Activated naive CD4-positive, alpha-beta T cell treated with anti-CD3 and anti-CD28 coated beads for 36 hours (primary cell): ENCODE measurements at regions of chr3 and their contacts with region 1.

Region 1: DNA sequence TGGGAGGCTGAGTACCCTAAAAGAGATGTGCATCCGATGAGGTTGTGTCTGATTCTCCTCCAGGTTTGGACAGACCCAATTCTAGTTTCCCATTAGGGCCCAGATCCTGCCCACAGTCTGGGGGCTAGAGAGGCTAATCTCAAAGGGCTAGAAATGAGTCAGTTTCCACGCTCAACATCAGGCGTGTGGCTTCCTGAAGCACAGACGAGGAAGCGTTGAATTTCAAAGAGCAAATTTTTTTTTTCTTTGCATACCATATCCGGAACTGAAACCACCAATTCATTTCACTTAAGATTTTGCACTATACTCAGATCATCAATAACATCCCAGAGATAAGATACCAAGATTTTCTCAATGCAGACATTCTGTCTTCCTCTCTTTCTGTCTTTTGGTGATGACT is 173.8 kb upstream of the BCL6 start:
- DNase-seq: peak; percentile 77
- H3K4me3 Mint-ChIP-seq: peak overlapping the region; percentile 60
- H3K27ac Mint-ChIP-seq: peak overlapping the region; percentile 94
- H3K4me1 Mint-ChIP-seq: peaks cover 83% of the 10 kb centered on the region
- H3K27me3 Mint-ChIP-seq: no peaks in the 10 kb centered on the region

Region 2: DNA sequence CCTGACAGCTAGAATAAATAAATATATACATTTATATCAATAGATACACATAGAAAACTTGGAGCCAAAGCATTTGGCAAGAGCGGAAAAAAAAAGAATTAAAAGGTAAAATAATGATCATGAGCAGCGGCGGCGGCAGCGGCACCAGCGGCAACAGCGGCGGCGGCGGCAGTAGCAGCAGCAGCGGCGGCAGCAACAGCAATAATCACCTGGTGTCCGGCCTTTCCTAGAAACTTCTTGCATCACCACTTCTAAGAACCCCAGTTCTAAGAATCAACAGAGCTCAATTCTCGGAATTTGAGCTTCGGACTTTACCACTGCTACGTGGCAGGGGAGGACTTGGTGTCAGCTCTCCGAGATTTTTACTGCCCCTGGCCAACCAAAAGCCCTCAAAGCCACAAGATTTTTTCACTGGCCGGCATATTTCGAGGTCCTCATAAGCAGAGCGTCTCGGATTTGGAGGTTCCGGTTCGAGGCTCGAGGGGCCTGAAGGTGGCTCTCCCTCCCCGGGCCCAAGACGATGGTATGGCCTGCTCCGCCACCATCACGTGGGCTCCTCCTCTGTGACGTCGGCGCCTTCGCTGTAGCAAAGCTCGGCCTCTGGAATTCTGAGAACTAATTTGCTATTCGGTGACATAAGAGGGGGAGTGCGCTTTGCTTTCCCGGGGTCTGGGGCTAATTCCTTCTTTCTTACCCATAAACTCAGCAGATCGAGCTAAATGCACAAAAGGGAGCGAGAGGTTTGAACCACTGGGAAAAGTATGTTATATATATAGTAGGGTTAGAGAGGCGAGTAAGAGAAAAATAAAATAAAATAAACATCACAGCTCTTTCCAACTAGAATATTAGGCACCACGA is 173.6 kb before region 1 on chr3 and contains the start of gene BCL6:
- CTCF ChIA-PET with region 1: interaction called, 12 read pairs
- intact Hi-C with region 1: loop called (anchors 1 kb)
- DNase-seq: peak; percentile 92
- H3K4me3 Mint-ChIP-seq: peak within 1 kb of the TSS; percentile 86
- H3K27ac Mint-ChIP-seq: peak within 1 kb of the TSS; percentile 97
- H3K4me1 Mint-ChIP-seq: peaks cover 46% of the 10 kb centered on the region
- H3K27me3 Mint-ChIP-seq: no peaks in the 10 kb centered on the region
- total RNA-seq, gene BCL6: 98.9 to 101 TPM

Region 3: GRCh38 chr3:187802928-187803259 is 116.2 kb before region 1 on chr3:
- CTCF ChIA-PET with region 1: interaction called, 4 read pairs
- intact Hi-C with region 1: loop called (anchors 1 kb)
- DNase-seq: peak; percentile 89
- H3K4me3 Mint-ChIP-seq: peak overlapping the region; percentile 1
- H3K27ac Mint-ChIP-seq: peak overlapping the region; percentile 79
- H3K4me1 Mint-ChIP-seq: peaks cover 95% of the 10 kb centered on the region
- H3K27me3 Mint-ChIP-seq: no peaks in the 10 kb centered on the region

Region 4: GRCh38 chr3:187986514-187986934 is 67.5 kb after region 1 on chr3:
- CTCF ChIA-PET with region 1: interaction called, 3 read pairs
- intact Hi-C with region 1: loop called (anchors 2 kb)
- DNase-seq: peak; percentile 79
- H3K4me3 Mint-ChIP-seq: no peak overlapping the region
- H3K27ac Mint-ChIP-seq: peak overlapping the region; percentile 22
- H3K4me1 Mint-ChIP-seq: peaks cover 33% of the 10 kb centered on the region
- H3K27me3 Mint-ChIP-seq: no peaks in the 10 kb centered on the region

Region 5: DNA sequence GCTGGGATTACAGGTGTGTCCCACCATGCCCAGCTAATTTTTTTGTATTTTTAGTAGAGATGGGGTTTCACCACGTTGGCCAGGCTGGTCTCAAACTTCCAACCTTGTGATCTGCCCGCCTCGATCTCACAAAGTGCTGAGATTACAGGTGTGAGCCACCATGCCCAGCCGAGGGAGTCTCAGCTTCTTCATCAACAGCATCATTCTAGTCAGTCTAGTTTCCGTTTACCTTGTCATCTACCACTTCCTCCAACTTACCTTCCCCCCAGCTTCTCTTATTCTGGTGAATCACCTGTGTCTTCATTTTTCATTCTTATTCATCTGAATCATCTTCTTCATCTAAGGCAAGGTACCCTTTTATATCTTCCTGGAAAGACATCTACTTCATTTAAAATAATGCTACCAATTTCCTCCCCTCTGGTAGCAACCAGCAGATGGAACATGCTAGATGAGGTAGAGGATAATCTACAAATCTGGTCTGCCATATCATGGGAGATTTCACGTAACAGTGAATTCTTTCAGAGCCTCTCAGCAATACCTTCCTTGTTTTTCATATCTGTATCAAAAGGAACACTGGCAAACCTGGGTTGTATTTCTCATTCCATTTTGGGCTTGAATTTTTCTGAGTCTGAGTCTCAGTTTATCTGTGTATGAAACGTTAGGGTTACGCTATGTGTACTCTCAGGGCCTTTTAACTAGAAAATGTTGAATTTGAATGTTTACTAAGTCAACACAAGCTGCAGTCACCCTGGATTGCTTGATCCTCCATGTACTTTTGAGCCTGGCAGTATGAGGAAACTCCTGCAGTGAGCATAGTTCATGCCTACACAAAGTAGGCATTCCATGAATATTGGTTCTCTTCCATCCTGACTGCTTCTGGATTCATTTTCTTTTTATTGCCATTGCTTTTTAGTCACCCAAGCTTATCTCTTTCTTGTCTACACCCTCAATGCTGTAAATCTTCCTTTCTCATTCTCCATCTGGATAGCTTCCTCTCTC is 251.7 kb after region 1 on chr3:
- CTCF ChIA-PET with region 1: no interaction called
- intact Hi-C with region 1: loop called (anchors 1 kb)
- DNase-seq: peak; percentile 89
- H3K4me3 Mint-ChIP-seq: peak overlapping the region; percentile 39
- H3K27ac Mint-ChIP-seq: peak overlapping the region; percentile 86
- H3K4me1 Mint-ChIP-seq: peaks cover 64% of the 10 kb centered on the region
- H3K27me3 Mint-ChIP-seq: no peaks in the 10 kb centered on the region

Region 6: DNA sequence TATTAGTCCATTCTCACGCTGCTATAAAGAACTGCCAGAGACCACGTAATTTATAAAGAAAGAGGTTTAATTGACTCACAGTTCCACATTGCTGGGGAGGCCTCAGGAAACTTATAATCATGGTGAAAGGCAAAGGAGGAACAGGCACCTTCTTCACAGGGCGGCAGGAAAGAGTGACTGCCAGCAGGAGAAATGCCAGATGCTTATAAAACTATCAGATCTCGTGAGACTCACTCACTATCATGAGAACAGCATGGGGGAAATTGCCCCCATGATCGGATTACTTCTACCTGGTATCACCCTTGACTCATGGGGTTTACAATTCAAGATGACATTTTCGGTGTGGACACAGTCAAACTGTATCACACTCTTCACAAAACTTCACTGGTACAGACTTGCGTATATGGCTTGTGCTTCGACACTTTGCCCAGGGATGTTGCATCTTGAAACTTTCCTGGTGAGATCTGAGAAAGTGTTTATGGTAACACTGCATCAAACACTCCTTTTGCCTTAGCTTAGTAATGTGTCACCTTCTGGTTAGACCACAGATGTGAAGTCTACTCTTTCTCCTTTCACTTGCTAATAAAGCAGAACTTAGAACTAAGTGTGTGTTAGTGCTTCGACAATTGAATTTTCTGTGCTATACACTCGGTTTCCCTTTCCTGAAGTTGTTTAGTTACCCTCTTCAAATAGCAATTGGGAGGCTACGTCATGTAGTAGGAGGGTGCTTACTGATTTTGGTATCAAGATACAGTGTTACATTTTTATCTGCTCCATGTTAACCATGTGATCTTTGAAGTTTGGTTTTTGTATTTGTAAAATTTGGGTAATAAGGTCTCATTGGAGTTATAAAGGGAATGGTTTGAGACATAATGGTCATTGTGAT is 420.6 kb after region 1 on chr3:
- CTCF ChIA-PET with region 1: no interaction called
- intact Hi-C with region 1: loop called (anchors 1 kb)
- DNase-seq: peak; percentile 76
- H3K4me3 Mint-ChIP-seq: peak overlapping the region; percentile 59
- H3K27ac Mint-ChIP-seq: peak overlapping the region; percentile 92
- H3K4me1 Mint-ChIP-seq: peaks cover 34% of the 10 kb centered on the region
- H3K27me3 Mint-ChIP-seq: no peaks in the 10 kb centered on the region

Region 7: DNA sequence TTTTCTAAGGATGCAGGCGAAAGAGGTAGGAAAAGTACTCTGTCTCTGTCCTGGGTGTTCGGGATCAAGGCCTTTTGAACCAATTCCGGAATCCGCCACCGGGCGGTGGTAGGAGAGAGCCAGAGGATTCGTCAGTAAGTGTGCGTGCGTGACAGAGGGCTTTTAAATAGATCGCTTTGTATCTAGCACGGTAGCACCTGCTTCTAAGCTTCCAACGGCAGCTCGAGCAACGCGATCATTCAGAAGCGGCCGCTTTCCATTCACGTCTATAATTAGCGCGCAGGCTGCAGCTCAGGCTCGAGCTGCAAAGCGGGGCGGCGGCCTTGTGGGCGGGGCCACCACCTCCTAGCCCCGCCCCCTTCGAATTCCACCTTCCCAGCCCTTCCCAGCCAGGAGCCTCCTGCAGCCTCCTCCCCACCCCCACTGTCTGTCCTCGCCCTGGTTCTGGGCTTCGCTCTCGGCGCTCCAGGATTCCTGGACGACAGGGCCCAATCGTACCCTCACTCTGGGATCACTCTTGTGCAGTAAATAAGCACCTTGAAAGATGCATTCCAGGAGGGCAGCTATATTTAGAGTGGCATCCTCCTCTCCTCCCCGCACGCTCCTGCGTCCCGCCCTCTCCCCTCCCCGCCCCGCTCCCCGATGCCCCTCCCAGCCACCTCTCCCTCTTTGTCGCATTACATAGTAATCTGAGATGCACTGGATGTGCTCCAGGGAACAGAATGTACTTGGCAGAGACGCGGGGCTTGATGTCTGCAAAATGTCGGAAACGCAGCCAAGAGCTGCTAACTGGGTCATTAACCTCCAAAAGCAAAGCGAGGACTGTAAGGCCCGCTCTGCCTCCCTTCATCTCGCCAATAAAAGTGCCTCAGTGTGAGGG is 1028.6 kb after region 1 on chr3:
- CTCF ChIA-PET with region 1: no interaction called
- intact Hi-C with region 1: loop called (anchors 1 kb)
- DNase-seq: peak; percentile 61
- H3K4me3 Mint-ChIP-seq: no peak overlapping the region
- H3K27ac Mint-ChIP-seq: no peak overlapping the region
- H3K4me1 Mint-ChIP-seq: peaks cover 35% of the 10 kb centered on the region
- H3K27me3 Mint-ChIP-seq: peaks cover 18% of the 10 kb centered on the region